Naive thymus-derived CD4-positive, alpha-beta T cell (primary cell): ENCODE measurements at regions of chr19 and their contacts with region 1.

Region 1: GRCh38 chr19:4909897-4910593 is 744 bp downstream of the UHRF1 start:
- DNase-seq: peak; percentile 88 to 96 (median 94)
- ATAC-seq: peak; percentile 95
- H3K4me3 ChIP-seq: peak overlapping the region; percentile 61
- H3K4me3 Mint-ChIP-seq: peak overlapping the region; percentile 93 to 100 (median 99)
- H3K27ac ChIP-seq: peak overlapping the region; percentile 67
- H3K27ac Mint-ChIP-seq: peak overlapping the region in 4 of 9 donors; percentile 86 to 99 (median 89)
- H3K4me1 ChIP-seq: peaks cover 48 to 54% of the 10 kb centered on the region in 2 donors
- H3K4me1 Mint-ChIP-seq: peaks cover 44 to 74% (median 58%) of the 10 kb centered on the region in 7 donors
- H3K27me3 ChIP-seq: no peaks in the 10 kb centered on the region
- H3K27me3 Mint-ChIP-seq: no peaks in the 10 kb centered on the region

Region 2: DNA sequence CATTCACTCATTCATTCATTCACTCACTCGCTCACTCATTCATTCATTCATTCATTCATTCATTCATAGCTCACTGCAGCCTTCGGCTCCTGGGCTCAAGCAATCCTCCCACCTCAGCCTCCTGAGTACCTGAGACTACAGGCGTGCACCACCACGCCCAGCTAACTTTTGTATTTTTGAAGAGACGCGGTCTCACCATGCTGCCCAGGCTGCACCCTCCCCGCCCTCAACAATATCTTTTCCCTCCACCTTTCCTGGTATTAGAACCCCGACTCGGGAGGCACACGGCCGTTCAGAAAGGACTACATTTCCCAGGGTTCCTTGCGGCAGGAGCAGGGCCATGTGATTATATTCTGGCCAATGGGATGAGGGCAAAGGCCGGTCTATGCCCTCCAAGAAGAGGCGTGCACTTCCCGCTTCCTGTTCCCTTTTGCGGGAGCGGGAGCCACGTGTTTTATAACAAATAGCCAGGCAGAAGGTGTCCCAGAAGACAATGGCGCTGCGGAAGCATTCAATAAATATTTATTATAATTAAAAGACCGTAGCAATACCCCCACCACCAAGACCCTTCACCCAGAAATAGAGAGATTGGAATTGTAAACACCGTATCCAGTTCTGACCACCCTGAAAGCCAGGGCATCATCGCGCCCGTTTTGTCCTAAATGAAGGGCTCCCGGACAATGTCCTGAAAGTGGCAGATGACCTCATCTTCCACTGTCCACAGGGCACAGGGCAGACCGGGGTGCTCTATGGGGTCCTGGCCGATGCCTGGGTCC is 94.4 kb before region 1 on chr19:
- CTCF ChIA-PET with region 1: interaction called, 24 read pairs
- POLR2A ChIA-PET with region 1: no interaction called
- intact Hi-C with region 1: loop called (anchors 1 kb)
- DNase-seq: peak; percentile 43 to 77 (median 67)
- ATAC-seq: peak; percentile 86
- H3K4me3 ChIP-seq: peak overlapping the region; percentile 40
- H3K4me3 Mint-ChIP-seq: peak overlapping the region; percentile 68 to 88 (median 81)
- H3K27ac ChIP-seq: peak overlapping the region; percentile 48
- H3K27ac Mint-ChIP-seq: peak overlapping the region; percentile 26 to 91 (median 87)
- H3K4me1 ChIP-seq: peaks cover 4 to 14% of the 10 kb centered on the region in 2 donors
- H3K4me1 Mint-ChIP-seq: peaks cover 11 to 29% (median 18%) of the 10 kb centered on the region in 7 donors
- H3K27me3 ChIP-seq: no peaks in the 10 kb centered on the region
- H3K27me3 Mint-ChIP-seq: no peaks in the 10 kb centered on the region

Region 3: DNA sequence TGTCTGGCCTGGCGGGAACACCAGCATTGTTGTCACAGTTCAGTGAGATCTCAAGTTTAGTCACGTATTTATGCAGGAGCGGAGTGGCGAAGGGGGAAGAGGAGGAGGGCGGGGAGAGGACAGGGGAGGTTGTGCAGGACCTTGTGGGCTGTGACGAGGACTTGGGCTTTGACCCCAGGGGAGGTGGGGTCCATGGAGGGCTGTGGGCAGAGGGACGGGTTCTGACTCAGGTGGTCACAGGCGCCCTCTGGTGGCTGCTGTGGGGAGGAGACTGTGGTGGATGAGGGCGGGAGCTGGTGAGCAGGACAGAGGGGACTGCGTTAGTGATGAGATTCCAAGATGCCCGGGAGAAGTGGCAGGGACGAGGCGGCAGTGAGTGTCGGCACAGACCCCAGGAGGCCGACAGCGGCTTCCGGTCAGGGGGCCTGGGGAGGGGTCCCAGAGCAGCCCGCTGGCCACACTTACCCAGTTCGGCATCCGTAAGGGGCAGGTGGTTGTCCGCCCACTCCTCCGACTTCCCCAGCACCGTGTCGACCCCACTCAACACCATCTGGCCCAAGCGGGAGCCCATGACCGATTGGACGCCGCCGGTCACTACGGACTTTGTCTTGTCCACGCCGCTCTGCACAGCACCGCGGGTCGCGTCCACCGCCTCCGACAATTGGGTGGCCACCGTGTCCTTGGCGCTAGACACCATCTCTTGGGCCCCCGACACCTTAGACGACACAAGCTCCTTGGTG is 58.3 kb before region 1 on chr19:
- CTCF ChIA-PET with region 1: interaction called, 14 read pairs
- POLR2A ChIA-PET with region 1: no interaction called
- intact Hi-C with region 1: no loop called
- DNase-seq: peak; percentile 52 to 79 (median 67)
- ATAC-seq: peak; percentile 94
- H3K4me3 ChIP-seq: no peak overlapping the region
- H3K4me3 Mint-ChIP-seq: no peak overlapping the region
- H3K27ac ChIP-seq: no peak overlapping the region
- H3K27ac Mint-ChIP-seq: peak overlapping the region in 2 of 9 donors; percentile 31 to 54
- H3K4me1 ChIP-seq: no peaks in the 10 kb centered on the region
- H3K4me1 Mint-ChIP-seq: peaks cover 0 to 5% (median 0%) of the 10 kb centered on the region in 7 donors
- H3K27me3 ChIP-seq: no peaks in the 10 kb centered on the region
- H3K27me3 Mint-ChIP-seq: no peaks in the 10 kb centered on the region

Region 4: DNA sequence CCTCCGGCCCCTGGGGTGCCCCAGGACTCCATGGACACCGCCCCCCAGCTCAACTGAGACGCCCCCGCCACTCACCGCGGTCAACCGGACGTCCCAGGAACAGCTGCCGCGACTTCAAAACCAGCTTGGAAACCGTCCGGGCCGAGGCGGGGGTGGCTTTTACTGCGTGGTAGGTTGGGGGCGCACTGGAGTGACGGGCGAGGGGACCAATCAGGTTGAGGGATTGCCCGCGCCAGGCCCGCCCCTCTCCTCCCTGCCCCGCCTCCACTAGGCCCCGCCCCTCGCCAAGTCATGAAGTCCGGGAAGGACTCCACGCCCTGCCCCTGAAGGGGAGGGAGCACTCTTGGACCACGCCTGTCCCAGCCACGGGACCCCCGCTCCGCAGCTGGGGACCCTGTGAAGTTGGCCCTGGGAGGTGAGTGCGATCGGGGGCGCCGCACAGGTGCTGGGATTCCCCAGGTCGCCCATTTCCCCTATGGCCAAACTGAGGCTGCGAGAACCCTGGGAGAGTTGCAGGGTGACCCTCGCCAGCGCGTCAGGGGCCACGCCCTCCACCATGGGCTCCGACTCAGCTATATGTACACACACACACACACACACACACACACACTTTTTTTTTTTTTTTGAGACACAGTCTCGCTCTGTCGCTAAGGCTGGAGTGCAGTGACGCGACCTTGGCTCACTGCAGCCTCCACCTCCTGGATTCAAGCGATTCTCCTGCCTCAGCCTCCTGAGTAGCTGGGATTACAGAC is 42.3 kb before region 1 on chr19 and contains the start of gene PLIN3:
- CTCF ChIA-PET with region 1: interaction called, 51 read pairs
- POLR2A ChIA-PET with region 1: interaction called, 14 read pairs
- intact Hi-C with region 1: loop called (anchors 1 kb)
- DNase-seq: peak; percentile 61 to 96 (median 79)
- ATAC-seq: peak; percentile 96
- H3K4me3 ChIP-seq: peak within 1 kb of the TSS; percentile 76
- H3K4me3 Mint-ChIP-seq: peak within 1 kb of the TSS; percentile 76 to 88 (median 84)
- H3K27ac ChIP-seq: peak within 1 kb of the TSS; percentile 70
- H3K27ac Mint-ChIP-seq: peak within 1 kb of the TSS; percentile 68 to 86 (median 75)
- H3K4me1 ChIP-seq: peaks cover 4 to 6% of the 10 kb centered on the region in 2 donors
- H3K4me1 Mint-ChIP-seq: peaks cover 5 to 25% (median 10%) of the 10 kb centered on the region in 7 donors
- H3K27me3 ChIP-seq: no peaks in the 10 kb centered on the region
- H3K27me3 Mint-ChIP-seq: no peaks in the 10 kb centered on the region
- total RNA-seq, gene PLIN3: 12.8 to 38.2 (median 32.0) TPM

Region 5: GRCh38 chr19:5031231-5032100 is 121.4 kb after region 1 on chr19:
- CTCF ChIA-PET with region 1: interaction called, 10 read pairs
- POLR2A ChIA-PET with region 1: interaction called, 3 read pairs
- intact Hi-C with region 1: loop called in 1 of 2 experiments (anchors 2 kb)
- DNase-seq: peak; percentile 58 to 86 (median 74)
- ATAC-seq: peak; percentile 91
- H3K4me3 ChIP-seq: no peak overlapping the region
- H3K4me3 Mint-ChIP-seq: no peak overlapping the region
- H3K27ac ChIP-seq: no peak overlapping the region
- H3K27ac Mint-ChIP-seq: peak overlapping the region in 1 of 9 donors; percentile 49
- H3K4me1 ChIP-seq: no peaks in the 10 kb centered on the region
- H3K4me1 Mint-ChIP-seq: peaks cover 0 to 14% (median 12%) of the 10 kb centered on the region in 7 donors
- H3K27me3 ChIP-seq: no peaks in the 10 kb centered on the region
- H3K27me3 Mint-ChIP-seq: no peaks in the 10 kb centered on the region

Region 6: DNA sequence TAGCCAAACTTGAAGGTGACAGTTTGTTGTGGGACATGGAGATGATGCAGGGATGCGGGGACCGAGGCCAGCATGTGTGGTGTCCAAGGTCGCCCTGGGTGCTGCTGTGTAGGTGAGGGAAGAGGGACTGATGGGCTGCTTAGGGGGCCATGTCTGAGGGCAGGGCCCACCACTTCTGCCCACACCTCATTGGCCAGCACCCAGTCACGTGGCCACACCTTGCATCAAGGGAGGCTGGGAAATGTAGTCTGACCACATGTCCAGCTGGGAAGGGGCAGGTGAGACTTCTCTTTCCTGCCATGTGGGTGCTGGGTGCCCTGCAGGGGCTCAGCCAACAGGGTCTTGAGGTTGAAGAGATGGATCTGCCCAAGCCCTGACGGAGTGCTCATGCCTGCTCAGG is 147.8 kb after region 1 on chr19:
- CTCF ChIA-PET with region 1: no interaction called
- POLR2A ChIA-PET with region 1: no interaction called
- intact Hi-C with region 1: no loop called
- DNase-seq: no peak
- ATAC-seq: no peak
- H3K4me3 ChIP-seq: no peak overlapping the region
- H3K4me3 Mint-ChIP-seq: no peak overlapping the region
- H3K27ac ChIP-seq: no peak overlapping the region
- H3K27ac Mint-ChIP-seq: no peak overlapping the region
- H3K4me1 ChIP-seq: no peaks in the 10 kb centered on the region
- H3K4me1 Mint-ChIP-seq: peaks cover 0 to 3% (median 0%) of the 10 kb centered on the region in 7 donors
- H3K27me3 ChIP-seq: no peaks in the 10 kb centered on the region
- H3K27me3 Mint-ChIP-seq: no peaks in the 10 kb centered on the region